ENCODE measurements at regions of chr15 and their contacts with region 1.

Region 1: GRCh38 chr15:79853458-79854328 is 43.1 kb downstream of the MTHFS start:
- H3K4me3 Mint-ChIP-seq: no peak overlapping the region
- H3K27ac Mint-ChIP-seq: no peak overlapping the region
- H3K4me1 Mint-ChIP-seq: peaks cover 5% of the 10 kb centered on the region
- H3K27me3 Mint-ChIP-seq: no peaks in the 10 kb centered on the region

Region 2: DNA sequence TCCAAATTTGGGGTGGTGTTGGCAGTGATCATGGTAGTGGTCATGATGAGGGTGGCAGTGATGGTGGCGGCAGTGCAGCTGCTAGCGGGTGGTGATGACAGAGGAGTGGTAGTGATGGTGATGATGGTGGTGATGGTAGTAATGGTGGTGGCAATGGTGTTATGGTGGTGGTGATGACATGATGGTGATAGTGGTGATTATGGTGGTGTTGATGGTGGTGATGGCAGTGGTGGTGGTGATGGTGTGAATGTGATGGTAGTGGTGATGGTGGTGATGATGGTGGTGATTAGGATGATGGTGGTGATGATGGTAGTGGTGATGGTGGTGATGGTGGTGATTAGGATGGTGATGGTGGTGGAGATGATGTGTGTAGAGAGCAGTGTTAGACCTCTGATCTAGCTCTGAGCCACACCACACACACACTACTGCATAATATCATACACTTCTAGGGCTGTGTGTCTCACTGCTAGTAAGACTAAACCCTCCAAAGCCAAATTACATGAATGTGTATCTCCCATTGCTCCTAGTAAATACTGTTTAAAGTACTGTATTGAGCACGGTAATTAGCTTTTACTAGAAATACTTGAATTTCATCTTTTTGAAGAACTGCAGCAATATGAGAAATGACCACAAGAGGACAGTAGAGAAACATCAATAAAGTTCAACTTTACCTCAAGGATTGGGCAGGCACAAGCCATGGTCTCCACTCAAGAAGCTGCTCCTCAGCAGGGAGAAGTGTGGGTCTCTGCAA is 514.0 kb before region 1 on chr15:
- intact Hi-C with region 1: loop called (anchors 1 kb)
- H3K4me3 Mint-ChIP-seq: no peak overlapping the region
- H3K27ac Mint-ChIP-seq: no peak overlapping the region
- H3K4me1 Mint-ChIP-seq: no peaks in the 10 kb centered on the region
- H3K27me3 Mint-ChIP-seq: no peaks in the 10 kb centered on the region

Region 3: GRCh38 chr15:79380755-79381497 is 472.8 kb before region 1 on chr15:
- intact Hi-C with region 1: loop called (anchors 1 kb)
- H3K4me3 Mint-ChIP-seq: no peak overlapping the region
- H3K27ac Mint-ChIP-seq: no peak overlapping the region
- H3K4me1 Mint-ChIP-seq: peaks cover 8% of the 10 kb centered on the region
- H3K27me3 Mint-ChIP-seq: no peaks in the 10 kb centered on the region

Region 4: GRCh38 chr15:79769069-79769481 is 84.6 kb before region 1 on chr15:
- intact Hi-C with region 1: loop called (anchors 5 kb)
- H3K4me3 Mint-ChIP-seq: no peak overlapping the region
- H3K27ac Mint-ChIP-seq: no peak overlapping the region
- H3K4me1 Mint-ChIP-seq: no peaks in the 10 kb centered on the region
- H3K27me3 Mint-ChIP-seq: no peaks in the 10 kb centered on the region

Region 5: DNA sequence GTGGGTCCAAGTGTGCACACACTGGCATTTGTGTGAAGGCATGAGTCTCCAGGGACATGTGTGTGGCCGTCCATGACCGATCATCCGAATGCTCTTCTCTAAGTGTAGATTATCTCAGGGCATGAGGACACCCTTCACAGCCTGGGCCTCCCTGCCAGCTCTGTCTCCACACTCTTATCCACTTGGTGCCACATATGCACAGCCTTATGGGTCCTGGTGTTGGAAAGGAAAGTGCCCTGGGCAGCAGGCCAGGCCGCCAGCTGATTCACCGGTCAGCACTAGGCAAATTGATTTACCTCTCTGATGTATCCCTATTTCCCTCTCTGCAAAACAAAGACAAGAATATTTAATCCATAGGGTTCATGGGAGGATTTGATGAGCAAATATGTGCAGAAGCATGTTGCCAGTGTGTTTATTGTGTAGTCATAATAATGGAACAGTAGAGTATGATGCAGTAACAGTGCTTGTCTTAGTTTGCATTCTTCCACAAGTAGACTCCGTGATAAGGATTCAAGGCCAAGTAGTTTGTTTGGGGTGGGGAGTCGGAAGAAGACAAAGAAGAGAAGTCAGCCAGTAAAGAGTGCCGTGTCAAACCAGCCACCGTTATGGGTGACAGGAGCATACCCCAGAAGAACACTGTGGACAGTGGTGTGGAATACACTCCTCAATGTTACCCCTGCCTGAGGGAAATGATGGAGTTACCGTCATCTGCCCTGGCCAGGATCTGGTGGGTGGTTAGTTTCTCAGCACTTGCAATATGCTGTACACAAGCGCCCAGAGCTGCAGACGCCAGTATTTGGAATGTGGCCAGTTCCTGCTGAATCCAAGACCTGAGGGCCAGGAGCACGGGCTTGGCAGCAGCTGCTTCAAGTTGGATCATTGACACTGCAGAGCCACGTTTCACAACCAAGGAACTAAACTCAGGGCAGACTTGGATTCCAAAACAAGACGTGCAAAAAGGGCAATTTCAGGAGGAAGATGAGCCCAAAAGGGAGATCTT is 42.0 kb before region 1 on chr15:
- intact Hi-C with region 1: no loop called
- H3K4me3 Mint-ChIP-seq: no peak overlapping the region
- H3K27ac Mint-ChIP-seq: no peak overlapping the region
- H3K4me1 Mint-ChIP-seq: peaks cover 22% of the 10 kb centered on the region
- H3K27me3 Mint-ChIP-seq: no peaks in the 10 kb centered on the region

Measured in dendritic cell treated with granulocyte-macrophage colony-stimulating factor and Interleukin-4, amounts not matched to agents 40 ng/mL and 50 ng/mL, for 4 days (primary cell).